Heart right ventricle (tissue), 16 donors: ENCODE measurements at regions of chr17 and their contacts with region 1.

Region 1: GRCh38 chr17:55421179-55421934 is at the start of gene MMD:
- DNase-seq: no peak
- ATAC-seq: peak; percentile 3 to 54 (median 20)
- H3K4me3 ChIP-seq: peak within 1 kb of the TSS; percentile 76 to 99 (median 95)
- H3K27ac ChIP-seq: peak within 1 kb of the TSS; percentile 56 to 95 (median 89)
- H3K4me1 ChIP-seq: peaks cover 4 to 41% (median 28%) of the 10 kb centered on the region in 9 donors
- H3K27me3 ChIP-seq: peaks cover 0 to 24% (median 0%) of the 10 kb centered on the region in 7 donors
- CTCF ChIP-seq: no peak
- total RNA-seq, gene MMD: 6.7 to 20.8 (median 11.4) TPM

Region 2: DNA sequence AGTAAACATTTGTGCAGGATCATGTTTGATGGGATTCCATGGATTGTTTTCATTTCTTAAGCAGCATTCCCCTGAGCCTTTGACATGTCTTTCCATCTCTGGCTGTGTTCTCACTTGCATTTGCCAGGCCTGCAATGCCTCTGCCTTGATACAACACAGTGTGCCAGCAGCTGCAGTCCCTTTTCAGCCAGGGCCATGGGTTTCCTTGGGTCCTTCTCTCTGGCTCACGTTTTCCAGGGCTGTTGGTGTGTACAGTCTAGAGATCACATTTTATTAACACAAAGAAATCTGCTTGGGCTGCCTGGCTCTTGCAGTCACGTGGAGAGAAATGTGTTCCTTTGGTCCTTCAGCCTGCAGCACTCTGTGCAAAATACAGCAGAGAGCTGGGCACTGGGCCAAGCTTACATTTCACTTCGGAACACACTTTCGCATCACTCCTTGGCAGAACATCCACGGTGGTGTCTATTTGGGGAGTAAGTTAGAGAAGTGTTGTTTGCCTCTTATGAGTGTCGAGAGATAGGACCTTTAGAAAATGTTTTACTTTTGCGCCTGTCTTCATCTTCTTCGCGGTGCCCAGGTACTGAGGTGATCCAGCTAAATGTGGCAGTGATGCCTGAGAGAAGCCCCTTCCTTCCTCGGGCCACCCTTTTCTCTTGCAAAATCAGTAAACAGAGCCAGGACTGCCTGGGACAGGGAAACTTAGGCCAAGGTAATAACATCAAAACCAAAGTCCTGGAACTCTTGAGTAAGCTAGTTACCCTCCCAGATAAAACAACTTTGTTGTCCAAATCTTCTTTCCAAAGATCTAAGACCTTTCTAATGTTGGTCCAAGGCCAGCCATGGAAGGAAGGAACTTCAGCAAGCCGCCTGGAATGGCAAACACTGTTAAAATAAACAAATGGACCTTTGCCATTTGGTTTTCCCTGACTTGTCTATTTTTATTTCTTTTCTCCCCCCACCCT is 135.7 kb before region 1 on chr17:
- intact Hi-C with region 1: loop called in 2 of 10 experiments (anchors 10 kb)
- DNase-seq: peak; percentile 81 to 94
- ATAC-seq: peak; percentile 79 to 93 (median 91)
- H3K4me3 ChIP-seq: peak overlapping the region in 1 of 10 donors; percentile 6
- H3K27ac ChIP-seq: peak overlapping the region; percentile 54 to 94 (median 84)
- H3K4me1 ChIP-seq: peaks cover 19 to 96% (median 80%) of the 10 kb centered on the region in 9 donors
- H3K27me3 ChIP-seq: no peaks in the 10 kb centered on the region
- CTCF ChIP-seq: no peak

Region 3: GRCh38 chr17:55388842-55389241 is 32.5 kb before region 1 on chr17:
- intact Hi-C with region 1: no loop called
- DNase-seq: no peak
- ATAC-seq: peak in 4 of 8 donors; percentile 19 to 55 (median 35)
- H3K4me3 ChIP-seq: no peak overlapping the region
- H3K27ac ChIP-seq: no peak overlapping the region
- H3K4me1 ChIP-seq: peaks cover 0 to 15% (median 0%) of the 10 kb centered on the region in 9 donors
- H3K27me3 ChIP-seq: no peaks in the 10 kb centered on the region
- CTCF ChIP-seq: no peak

Region 4: DNA sequence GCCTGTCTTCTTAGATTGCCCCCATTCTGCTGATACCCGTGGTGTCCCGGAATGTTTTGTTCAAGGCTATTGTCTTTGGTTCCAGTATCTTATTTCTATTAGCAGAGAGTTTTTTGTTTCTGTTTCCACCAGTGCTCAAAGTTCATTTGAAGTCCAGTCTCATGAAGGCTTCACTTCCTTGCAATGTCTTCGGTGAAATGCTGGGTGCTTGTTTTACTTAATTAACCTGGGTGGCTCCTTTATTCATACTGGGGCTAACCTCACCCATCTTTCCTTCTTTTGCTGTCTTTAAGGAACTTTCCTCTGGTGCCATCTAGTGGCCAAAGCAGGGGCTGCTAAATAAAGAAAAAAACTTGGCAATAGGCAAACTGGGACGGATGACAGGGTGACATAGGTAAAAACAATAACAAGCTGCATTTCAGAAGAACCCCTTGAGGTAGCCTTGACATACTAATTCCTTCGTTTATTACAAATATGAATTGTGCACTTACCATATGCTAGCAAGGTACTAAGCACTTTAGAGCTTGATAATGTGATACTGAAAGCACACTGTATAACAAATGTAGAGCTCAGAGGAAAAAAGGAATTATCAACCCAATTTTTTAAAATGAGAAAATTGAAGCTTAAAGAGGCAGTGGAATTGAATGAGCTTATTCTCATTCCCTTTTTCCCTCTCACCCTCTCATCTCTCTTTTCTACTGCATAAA is 92.7 kb after region 1 on chr17:
- intact Hi-C with region 1: loop called in 4 of 10 experiments (anchors 5 to 10 kb)
- DNase-seq: peak in 1 of 2 donors; percentile 74
- ATAC-seq: peak in 7 of 8 donors; percentile 49 to 78 (median 55)
- H3K4me3 ChIP-seq: no peak overlapping the region
- H3K27ac ChIP-seq: no peak overlapping the region
- H3K4me1 ChIP-seq: peaks cover 0 to 7% (median 0%) of the 10 kb centered on the region in 9 donors
- H3K27me3 ChIP-seq: peaks cover 0 to 11% (median under 1%) of the 10 kb centered on the region in 7 donors
- CTCF ChIP-seq: peak; percentile 88 to 95 (median 93)

Region 5: GRCh38 chr17:55750750-55751657 is 329.6 kb after region 1 on chr17 and contains the start of gene PCTP:
- intact Hi-C with region 1: loop called in 2 of 10 experiments (anchors 10 kb)
- DNase-seq: peak; percentile 94 to 95
- ATAC-seq: peak; percentile 99 to 100 (median 100)
- H3K4me3 ChIP-seq: peak within 1 kb of the TSS; percentile 74 to 93 (median 81)
- H3K27ac ChIP-seq: peak within 1 kb of the TSS; percentile 85 to 96 (median 94)
- H3K4me1 ChIP-seq: peaks cover 6 to 25% (median 17%) of the 10 kb centered on the region in 9 donors
- H3K27me3 ChIP-seq: no peaks in the 10 kb centered on the region
- CTCF ChIP-seq: peak in 8 of 9 donors; percentile 9 to 62 (median 39)
- total RNA-seq, gene PCTP: 13.6 to 23.3 (median 19.9) TPM